ENCODE measurements at regions of chr7 and their contacts with region 1.

Region 1: GRCh38 chr7:32803406-32804141 is 88.0 kb downstream of the KBTBD2 start:
- DNase-seq: no peak
- H3K4me3 Mint-ChIP-seq: no peak overlapping the region
- H3K27ac Mint-ChIP-seq: no peak overlapping the region
- H3K4me1 Mint-ChIP-seq: no peaks in the 10 kb centered on the region
- H3K27me3 Mint-ChIP-seq: peaks cover 3% of the 10 kb centered on the region

Region 2: DNA sequence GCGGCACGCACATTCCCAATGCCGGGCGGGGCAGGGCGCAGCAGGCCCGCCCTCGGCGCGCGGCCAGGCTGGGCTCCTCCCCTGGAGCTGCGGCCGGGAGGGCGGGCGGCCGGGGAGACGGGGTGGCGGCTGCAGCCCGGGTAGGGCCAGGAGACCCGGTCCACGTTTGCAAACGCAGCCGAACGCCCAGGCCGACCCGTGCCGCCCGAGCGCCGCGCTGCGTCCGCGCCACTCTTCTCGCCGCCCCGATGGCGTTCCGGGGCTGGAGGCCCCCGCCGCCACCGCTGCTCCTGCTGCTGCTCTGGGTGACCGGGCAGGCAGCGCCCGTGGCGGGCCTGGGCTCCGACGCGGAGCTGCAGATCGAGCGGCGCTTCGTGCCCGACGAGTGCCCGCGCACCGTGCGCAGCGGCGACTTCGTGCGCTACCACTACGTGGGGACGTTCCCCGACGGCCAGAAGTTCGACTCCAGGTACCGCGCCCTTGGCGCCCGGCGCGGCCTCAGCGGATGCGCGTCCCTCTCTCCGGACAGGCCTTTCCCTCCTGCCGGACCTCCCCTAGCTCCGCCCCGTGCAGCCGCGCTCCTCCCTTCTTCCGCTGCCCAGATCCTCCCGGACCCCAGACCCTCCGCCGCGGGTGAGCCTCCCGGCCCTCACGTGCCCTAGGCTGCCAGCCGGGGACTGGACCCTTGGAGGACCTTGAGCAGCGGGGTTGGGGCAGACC is 153.9 kb after region 1 on chr7 and contains the start of gene FKBP9:
- intact Hi-C with region 1: loop called (anchors 5 kb)
- DNase-seq: no peak
- H3K4me3 Mint-ChIP-seq: peak within 1 kb of the TSS; percentile 79
- H3K27ac Mint-ChIP-seq: peak within 1 kb of the TSS; percentile 2
- H3K4me1 Mint-ChIP-seq: peaks cover 6% of the 10 kb centered on the region
- H3K27me3 Mint-ChIP-seq: peaks cover 31% of the 10 kb centered on the region
- total RNA-seq, gene FKBP9: 0.52 and 2.4 TPM in 2 replicates

Measured in activated T-helper 1 cell treated with anti-CD3 and anti-CD28 coated beads, Interleukin-12 subunit alpha, Interleukin-12 subunit beta, Interleukin-2, Interleukin-4 antibody, amounts not matched to agents 30 ng/mL and 10 ng/mL and 1 ng/mL, durations not matched to agents 14 hours and 24 hours and 36 hours (primary cell).